ENCODE measurements at regions of chr12 and their contacts with region 1.

Region 1: GRCh38 chr12:50825372-50825838 is 17.3 kb upstream of the TMPRSS12 start:
- DNase-seq: no peak
- ATAC-seq: peak; percentile 64 to 93 (median 82)
- H3K4me3 ChIP-seq: no peak overlapping the region
- H3K27ac ChIP-seq: peak overlapping the region in 6 of 10 donors; percentile 32 to 76 (median 54)
- H3K4me1 ChIP-seq: peaks cover 0 to 14% (median 0%) of the 10 kb centered on the region in 9 donors
- H3K27me3 ChIP-seq: no peaks in the 10 kb centered on the region
- CTCF ChIP-seq: peak in 8 of 9 donors; percentile 19 to 75 (median 56)

Region 2: DNA sequence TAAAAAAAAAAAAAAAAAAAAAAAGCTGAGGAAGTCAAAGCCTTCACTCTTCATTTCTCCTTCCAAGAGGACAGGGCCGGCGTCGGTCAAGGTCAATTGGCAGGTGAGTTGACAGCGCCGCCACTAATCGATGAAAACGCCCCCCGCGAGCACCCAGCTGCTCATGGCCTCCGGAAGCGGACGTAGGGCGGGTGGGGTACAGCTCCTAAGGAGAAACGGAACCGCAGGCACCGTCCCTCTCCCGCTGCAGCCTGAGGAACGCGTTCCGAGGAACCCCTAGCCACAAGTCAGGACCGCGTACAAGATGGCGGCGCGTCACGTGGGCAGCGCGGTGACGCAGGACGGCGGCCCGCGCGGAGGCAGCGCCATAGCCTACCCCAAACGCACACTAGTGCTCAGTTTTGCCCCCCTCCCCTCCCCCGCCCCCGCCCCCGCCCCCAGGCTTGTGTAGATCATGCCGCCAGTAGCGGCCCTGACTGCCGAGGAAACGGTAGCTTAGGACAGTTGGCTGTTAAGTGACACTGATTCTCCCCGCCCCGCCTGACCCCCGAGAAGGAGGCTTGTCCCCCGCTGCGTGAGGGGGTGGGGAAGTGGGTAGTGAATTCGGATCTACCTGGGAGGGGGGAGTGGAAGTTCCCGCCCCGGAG is 61.6 kb before region 1 on chr12 and contains the start of gene ATF1:
- intact Hi-C with region 1: loop called in 2 of 10 experiments (anchors 5 kb)
- DNase-seq: peak; percentile 88 to 90
- ATAC-seq: peak; percentile 93 to 97 (median 95)
- H3K4me3 ChIP-seq: peak within 1 kb of the TSS; percentile 59 to 100 (median 98)
- H3K27ac ChIP-seq: peak within 1 kb of the TSS; percentile 93 to 99 (median 98)
- H3K4me1 ChIP-seq: peaks cover 1 to 47% (median 27%) of the 10 kb centered on the region in 9 donors
- H3K27me3 ChIP-seq: no peaks in the 10 kb centered on the region
- CTCF ChIP-seq: no peak
- total RNA-seq, gene ATF1: 19.6 to 31.9 (median 24.3) TPM

Region 3: GRCh38 chr12:50924439-50925341 is 99.3 kb after region 1 on chr12:
- intact Hi-C with region 1: loop called in 2 of 10 experiments (anchors 2 to 5 kb)
- DNase-seq: peak; percentile 81 to 95
- ATAC-seq: peak; percentile 92 to 96 (median 94)
- H3K4me3 ChIP-seq: peak overlapping the region; percentile 60 to 88 (median 78)
- H3K27ac ChIP-seq: peak overlapping the region; percentile 77 to 94 (median 90)
- H3K4me1 ChIP-seq: peaks cover 0 to 65% (median 58%) of the 10 kb centered on the region in 9 donors
- H3K27me3 ChIP-seq: no peaks in the 10 kb centered on the region
- CTCF ChIP-seq: no peak

Region 4: GRCh38 chr12:50934981-50935807 is 109.8 kb after region 1 on chr12:
- intact Hi-C with region 1: loop called in 1 of 10 experiments (anchors 5 kb)
- DNase-seq: no peak
- ATAC-seq: peak in 6 of 8 donors; percentile 37 to 77 (median 49)
- H3K4me3 ChIP-seq: peak overlapping the region in 1 of 10 donors; percentile 12
- H3K27ac ChIP-seq: peak overlapping the region; percentile 37 to 85 (median 59)
- H3K4me1 ChIP-seq: peaks cover 6 to 41% (median 30%) of the 10 kb centered on the region in 9 donors
- H3K27me3 ChIP-seq: no peaks in the 10 kb centered on the region
- CTCF ChIP-seq: no peak

Region 5: DNA sequence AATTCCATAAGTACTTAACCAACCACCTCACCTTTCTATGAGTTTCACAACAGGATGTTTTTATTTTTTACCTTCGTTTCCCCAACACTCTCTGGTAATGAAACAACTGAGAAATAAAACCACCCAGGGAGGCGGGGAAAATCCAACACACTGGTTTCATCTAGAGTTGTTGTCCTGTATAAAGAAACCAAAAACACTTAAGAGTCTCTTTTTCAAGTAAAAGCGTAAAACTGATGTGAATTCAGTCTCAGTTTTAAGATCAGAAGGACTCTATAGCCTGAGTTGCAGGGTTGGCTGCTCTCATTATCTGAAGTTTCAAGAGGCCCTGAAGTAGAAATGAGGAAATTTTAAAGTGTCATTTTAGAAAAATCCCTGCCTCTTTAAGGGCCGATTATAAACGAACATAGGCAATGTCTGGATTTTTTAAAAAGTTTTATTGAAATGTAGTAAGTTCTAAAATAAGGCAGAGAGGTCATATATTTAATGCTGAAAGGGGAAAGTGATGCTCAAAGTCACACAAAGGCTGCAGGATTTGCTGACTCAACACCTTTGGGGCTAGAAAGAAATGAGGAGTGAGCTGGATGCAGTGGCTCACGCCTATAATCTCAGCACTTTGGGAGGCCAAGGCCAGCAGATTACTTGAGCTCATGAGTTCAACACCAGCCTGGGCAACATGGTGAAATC is 154.1 kb after region 1 on chr12:
- intact Hi-C with region 1: loop called in 2 of 10 experiments (anchors 2 to 5 kb)
- DNase-seq: no peak
- ATAC-seq: no peak
- H3K4me3 ChIP-seq: no peak overlapping the region
- H3K27ac ChIP-seq: no peak overlapping the region
- H3K4me1 ChIP-seq: peaks cover 0 to 3% (median 2%) of the 10 kb centered on the region in 9 donors
- H3K27me3 ChIP-seq: no peaks in the 10 kb centered on the region
- CTCF ChIP-seq: no peak

Region 6: GRCh38 chr12:50986966-50987737 is 161.7 kb after region 1 on chr12:
- intact Hi-C with region 1: loop called (anchors 1 to 5 kb)
- DNase-seq: peak in 1 of 2 donors; percentile 61
- ATAC-seq: peak; percentile 54 to 88 (median 79)
- H3K4me3 ChIP-seq: no peak overlapping the region
- H3K27ac ChIP-seq: peak overlapping the region in 3 of 10 donors; percentile 9 to 68 (median 54)
- H3K4me1 ChIP-seq: peaks cover 0 to 28% (median 19%) of the 10 kb centered on the region in 9 donors
- H3K27me3 ChIP-seq: no peaks in the 10 kb centered on the region
- CTCF ChIP-seq: peak in 8 of 9 donors; percentile 47 to 79 (median 66)

Region 7: DNA sequence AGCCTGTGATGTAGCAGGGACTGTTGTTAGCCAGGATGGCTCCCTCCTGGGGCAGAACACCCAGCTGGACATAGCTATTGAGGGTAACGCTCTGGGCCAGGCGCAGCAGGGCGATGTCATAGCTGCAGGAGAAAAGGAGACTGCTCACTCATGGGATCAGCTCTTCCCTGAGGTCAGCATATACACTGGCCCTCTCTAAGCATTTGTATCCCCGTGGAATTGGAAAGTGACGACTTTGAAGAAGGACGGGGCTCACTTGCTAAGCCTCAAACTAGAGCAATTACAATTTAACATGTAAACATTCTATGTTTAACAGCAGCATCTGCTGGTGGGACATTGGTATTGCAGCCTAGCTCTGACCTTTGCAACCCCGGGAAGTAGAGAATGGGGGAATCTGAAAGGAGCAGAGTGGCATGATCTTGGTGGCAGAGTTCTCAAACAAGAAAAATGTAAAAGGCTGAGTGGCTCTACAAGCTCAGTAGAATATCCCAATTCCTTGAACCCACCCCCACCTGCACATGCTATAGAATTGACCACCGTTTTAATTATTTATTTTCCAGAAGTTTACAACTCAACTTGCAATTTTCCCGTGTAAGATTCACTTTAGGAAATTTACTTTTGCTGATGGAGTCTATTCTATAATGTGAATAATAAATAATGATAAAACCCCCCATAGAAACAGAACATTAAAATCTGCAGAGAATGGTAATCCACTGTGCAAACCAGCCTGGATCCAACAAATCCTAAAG is 516.0 kb after region 1 on chr12:
- intact Hi-C with region 1: loop called in 7 of 10 experiments (anchors 5 to 10 kb)
- DNase-seq: peak in 1 of 2 donors; percentile 59
- ATAC-seq: peak; percentile 72 to 90 (median 86)
- H3K4me3 ChIP-seq: peak overlapping the region in 5 of 10 donors; percentile 21 to 33 (median 28)
- H3K27ac ChIP-seq: peak overlapping the region in 1 of 10 donors; percentile 56
- H3K4me1 ChIP-seq: peaks cover 0 to 9% (median 4%) of the 10 kb centered on the region in 9 donors
- H3K27me3 ChIP-seq: no peaks in the 10 kb centered on the region
- CTCF ChIP-seq: peak; percentile 84 to 98 (median 97)